Head of caudate nucleus (tissue), 42 donors: ENCODE measurements at regions of chr5 and their contacts with region 1.

Region 1: GRCh38 chr5:178732281-178732680 is 1.8 kb upstream of the ZNF354A start:
- DNase-seq: no peak

Region 2: GRCh38 chr5:178695556-178695955 is 36.7 kb before region 1 on chr5:
- intact Hi-C with region 1: no loop called
- DNase-seq: no peak

Region 3: GRCh38 chr5:178859625-178860531 is 127.6 kb after region 1 on chr5 and contains the start of gene ZNF354B:
- intact Hi-C with region 1: loop called (anchors 2 kb)
- DNase-seq: peak; percentile 83 to 97 (median 93)

Region 4: DNA sequence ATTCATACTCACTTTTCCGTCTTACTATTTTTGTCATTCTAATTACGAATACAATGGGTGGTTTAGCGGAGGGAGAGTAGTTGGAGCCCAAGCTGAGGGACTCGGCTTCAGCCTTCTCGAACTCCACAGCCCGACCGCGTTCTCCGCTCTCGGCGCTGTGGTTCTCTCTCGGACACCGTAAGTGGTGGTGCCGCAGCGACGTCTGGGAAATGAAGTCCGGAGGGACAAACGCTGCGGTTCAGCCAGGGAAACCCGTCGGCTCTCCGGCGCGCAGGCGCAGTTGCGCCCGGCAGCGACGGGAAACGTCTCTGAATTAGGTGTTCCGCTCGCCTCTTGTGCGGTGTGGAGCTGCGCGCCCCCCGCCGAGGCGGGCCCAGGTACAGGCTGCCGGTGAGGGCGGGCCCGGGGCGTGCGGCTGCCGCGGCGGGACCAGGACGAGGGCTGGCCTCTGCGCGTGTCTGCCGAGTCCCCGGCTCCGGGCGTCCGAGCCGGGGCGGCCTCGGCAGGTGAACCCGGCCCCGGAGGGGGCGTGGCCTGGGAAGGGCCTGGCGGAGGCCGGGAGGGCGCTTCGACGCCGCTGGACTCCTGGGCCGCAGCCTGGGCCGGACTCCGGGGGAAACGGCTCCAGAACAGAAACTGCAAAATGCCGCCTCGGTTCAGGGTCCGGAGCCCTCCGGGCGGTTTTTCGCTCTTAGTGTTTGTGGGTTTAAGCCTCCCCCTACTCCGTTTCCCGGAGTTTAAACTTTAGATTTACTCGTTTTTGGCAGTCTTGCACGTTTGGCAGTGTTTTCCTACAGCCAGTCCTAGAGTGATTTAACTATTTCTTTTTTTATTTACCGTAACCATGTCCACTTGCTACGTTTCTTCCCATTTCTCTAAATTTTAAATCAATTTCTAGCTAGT is 291.5 kb after region 1 on chr5 and contains the start of gene ZNF879:
- intact Hi-C with region 1: loop called (anchors 10 kb)
- DNase-seq: peak; percentile 88 to 99 (median 96)